Right ventricle myocardium inferior (tissue), 1 donor: ENCODE measurements at regions of chrX and their contacts with region 1.

Region 1: DNA sequence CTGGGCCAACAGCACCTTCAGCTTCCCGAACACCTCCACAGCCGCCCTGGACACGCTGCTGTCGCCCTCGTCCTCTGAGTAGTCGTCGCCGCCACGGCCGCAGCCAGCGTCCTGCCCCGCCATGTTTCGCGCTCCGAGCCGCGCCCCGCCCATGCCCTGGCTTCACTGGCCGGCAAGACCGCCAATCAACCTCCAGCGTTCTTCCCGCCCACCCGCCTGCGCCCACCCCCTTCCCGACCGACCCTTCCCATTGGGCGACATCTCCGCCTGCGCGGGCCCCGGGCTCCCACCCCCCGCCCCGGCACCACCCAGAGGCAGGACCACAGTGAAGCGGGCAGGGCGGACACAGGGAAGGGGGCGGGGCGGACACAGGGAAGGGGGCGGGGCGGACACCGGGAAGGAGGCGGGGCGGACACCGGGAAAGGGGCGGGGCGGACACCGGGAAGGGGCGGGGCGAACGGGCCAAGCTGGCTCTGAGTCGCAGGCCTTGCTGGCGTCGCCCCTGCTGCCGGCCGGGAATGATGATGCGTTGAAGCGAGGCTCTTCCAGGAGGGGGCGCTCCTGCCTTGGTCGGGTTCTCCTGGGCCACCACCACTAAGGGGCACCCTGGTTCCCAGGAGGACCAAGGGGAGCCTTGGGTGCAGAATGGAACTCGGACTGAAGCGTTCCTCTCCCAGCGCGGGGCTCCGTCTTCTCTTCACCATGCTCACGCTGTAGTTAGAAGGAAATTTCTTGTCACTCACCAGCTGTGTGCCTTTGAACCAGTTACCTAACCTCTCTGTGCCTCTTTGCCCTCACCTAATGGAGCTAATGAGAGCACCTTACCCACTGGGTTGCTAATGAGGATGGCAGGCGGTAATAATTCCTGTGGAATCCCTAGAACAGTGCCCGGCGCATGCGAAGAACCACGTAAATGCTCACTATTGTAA is at the start of gene HAUS7:
- DNase-seq: peak; percentile 93
- ATAC-seq: peak; percentile 92
- total RNA-seq, gene HAUS7: 18.5 TPM

Region 2: DNA sequence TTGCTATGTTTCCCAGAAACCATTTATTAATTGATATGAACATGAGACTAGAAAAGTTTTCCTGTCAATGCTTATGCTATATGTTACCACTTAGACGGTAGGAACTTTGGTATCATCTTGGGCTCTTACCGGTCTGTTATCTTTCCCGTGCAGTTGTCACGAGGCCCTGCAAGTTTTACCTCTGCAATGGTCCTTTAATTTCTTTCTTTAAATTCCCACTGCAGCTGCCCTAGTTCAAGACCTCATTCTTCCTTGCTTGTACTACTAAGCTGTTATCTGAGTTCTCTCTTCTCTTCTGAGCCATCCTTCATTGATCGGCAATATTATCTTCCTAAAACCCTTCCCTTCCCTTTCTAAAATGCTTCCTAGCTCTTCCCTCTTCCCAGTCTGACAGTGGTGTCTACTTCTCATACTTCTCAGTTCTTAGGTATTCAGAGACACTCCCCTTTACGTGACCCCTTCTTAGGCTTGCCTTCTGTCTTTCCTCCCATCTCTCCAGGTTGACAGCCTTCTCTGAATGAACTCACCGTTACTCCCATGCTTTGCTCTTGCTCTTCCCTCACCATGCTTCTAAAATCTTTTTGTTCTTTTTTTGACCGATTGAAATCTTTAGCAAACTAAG is 264.2 kb before region 1 on chrX:
- intact Hi-C with region 1: no loop called
- DNase-seq: no peak
- ATAC-seq: no peak

Region 3: GRCh38 chrX:153494541-153495361 is 24.1 kb after region 1 on chrX and contains the start of gene BGN:
- intact Hi-C with region 1: loop called (anchors 1 kb)
- DNase-seq: no peak
- ATAC-seq: peak; percentile 63
- total RNA-seq, gene BGN: 42.2 TPM

Region 4: DNA sequence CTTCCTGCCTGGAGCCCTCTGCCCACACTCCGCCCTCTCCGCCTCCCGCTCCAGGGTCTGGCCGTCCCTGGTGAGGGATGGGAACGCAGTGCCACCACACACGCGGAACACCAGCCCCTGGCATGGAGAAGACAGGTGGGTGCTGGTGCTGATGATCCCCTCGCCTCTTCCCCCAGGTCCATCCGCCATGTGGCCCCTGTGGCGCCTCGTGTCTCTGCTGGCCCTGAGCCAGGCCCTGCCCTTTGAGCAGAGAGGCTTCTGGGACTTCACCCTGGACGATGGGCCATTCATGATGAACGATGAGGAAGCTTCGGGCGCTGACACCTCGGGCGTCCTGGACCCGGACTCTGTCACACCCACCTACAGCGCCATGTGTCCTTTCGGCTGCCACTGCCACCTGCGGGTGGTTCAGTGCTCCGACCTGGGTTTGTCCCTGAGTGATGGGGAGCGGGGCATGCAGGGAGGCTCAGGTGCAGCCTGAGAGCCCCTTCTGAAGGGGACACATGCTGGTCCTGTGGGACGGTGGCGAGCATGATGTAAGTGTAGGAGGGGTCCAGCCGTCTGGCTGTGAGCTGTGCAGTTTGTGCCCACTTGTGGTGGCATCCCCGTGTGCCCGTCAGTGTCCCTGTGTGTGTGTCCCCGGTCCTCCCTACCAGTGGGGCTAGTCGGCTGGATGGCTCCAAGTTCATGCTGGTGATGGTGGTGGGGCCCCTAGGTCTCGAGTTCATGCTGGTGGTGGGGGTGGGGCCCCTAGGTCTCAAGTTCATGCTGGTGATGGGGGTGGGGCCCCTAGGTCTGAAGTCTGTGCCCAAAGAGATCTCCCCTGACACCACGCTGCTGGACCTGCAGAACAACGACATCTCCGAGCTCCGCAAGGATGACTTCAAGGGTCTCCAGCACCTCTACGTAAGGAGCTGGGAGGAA is 34.0 kb after region 1 on chrX:
- intact Hi-C with region 1: loop called (anchors 2 kb)
- DNase-seq: no peak
- ATAC-seq: no peak